Esophagus muscularis mucosa (tissue), 4 donors: ENCODE measurements at regions of chr1 and their contacts with region 1.

Region 1: DNA sequence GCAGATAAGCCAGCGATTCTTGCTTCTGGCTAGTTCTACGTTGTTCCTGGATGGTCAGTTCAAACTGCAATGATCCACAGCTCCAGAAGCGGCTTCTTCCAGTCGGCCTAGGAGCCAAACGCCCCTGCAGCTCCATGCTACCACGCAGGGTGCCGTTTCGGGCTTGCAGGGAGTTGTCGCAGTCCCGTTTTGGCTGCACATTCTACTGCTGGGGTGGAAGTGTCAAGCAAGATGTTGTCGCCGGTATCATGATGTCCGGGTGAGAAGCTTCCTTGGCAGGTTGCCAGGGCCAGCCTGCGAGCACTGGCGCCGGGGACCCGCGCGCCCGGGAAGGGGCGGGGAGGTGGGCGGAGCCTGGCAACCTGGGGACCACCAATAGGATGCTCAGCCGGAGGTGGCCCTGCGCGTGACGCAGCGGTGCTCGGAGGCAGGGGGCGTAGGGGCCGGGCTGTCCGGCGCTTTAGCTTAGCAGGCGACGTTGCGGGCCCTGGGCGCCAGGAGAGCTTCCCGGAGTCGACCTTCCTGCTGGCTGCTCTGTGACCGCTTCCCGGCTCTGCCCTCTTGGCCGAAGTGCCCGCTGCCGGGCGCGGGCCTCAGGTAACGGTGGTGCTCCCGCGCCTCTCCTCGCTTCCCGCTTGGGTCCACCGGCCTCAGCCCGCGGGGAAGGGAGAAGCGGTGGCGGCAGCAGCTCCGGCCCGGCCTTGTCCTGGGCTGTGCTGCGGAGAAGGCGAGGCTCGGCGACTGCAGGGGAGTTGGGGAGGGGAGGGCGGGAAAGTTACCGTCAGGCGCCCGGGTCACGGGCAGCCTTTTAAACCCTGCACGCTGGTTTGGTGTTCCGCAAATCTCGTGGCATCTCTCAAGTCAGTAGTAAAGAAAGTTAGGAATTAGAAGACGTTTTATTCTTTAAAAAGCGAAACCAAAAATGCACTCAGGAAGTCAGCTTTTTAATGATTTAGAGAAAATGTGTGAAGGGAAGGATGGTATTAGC is at the start of gene SOAT1:
- DNase-seq: peak; percentile 98
- H3K4me3 ChIP-seq: peak within 1 kb of the TSS; percentile 67 to 76 (median 72)
- H3K27ac ChIP-seq: peak within 1 kb of the TSS; percentile 85 to 92 (median 90)
- H3K4me1 ChIP-seq: peaks cover 6 to 28% (median 25%) of the 10 kb centered on the region in 4 donors
- H3K27me3 ChIP-seq: no peaks in the 10 kb centered on the region
- CTCF ChIP-seq: peak in 2 of 3 experiments; percentile 11 to 21
- EP300 ChIP-seq: no peak
- POLR2A ChIP-seq: peak; percentile 56
- total RNA-seq, gene SOAT1: 10.8 to 19.7 (median 13.2) TPM

Region 2: GRCh38 chr1:178739285-178740045 is 554.2 kb before region 1 on chr1:
- intact Hi-C with region 1: no loop called
- DNase-seq: no peak
- H3K4me3 ChIP-seq: no peak overlapping the region
- H3K27ac ChIP-seq: no peak overlapping the region
- H3K4me1 ChIP-seq: peaks cover 0 to 7% (median 2%) of the 10 kb centered on the region in 4 donors
- H3K27me3 ChIP-seq: no peaks in the 10 kb centered on the region
- CTCF ChIP-seq: no peak
- EP300 ChIP-seq: no peak
- POLR2A ChIP-seq: no peak

Region 3: GRCh38 chr1:179081687-179082332 is 211.8 kb before region 1 on chr1 and contains the start of gene TOR3A:
- intact Hi-C with region 1: loop called (anchors 10 kb)
- DNase-seq: peak; percentile 98
- H3K4me3 ChIP-seq: peak within 1 kb of the TSS; percentile 83 to 93 (median 89)
- H3K27ac ChIP-seq: peak within 1 kb of the TSS; percentile 87 to 95 (median 91)
- H3K4me1 ChIP-seq: peaks cover 15 to 32% (median 24%) of the 10 kb centered on the region in 4 donors
- H3K27me3 ChIP-seq: no peaks in the 10 kb centered on the region
- CTCF ChIP-seq: no peak
- EP300 ChIP-seq: no peak
- POLR2A ChIP-seq: peak; percentile 83
- total RNA-seq, gene TOR3A: 38.6 to 55.8 (median 39.1) TPM